GM12878 (cell line): ENCODE measurements at regions of chr12 and their contacts with region 1.

Region 1: DNA sequence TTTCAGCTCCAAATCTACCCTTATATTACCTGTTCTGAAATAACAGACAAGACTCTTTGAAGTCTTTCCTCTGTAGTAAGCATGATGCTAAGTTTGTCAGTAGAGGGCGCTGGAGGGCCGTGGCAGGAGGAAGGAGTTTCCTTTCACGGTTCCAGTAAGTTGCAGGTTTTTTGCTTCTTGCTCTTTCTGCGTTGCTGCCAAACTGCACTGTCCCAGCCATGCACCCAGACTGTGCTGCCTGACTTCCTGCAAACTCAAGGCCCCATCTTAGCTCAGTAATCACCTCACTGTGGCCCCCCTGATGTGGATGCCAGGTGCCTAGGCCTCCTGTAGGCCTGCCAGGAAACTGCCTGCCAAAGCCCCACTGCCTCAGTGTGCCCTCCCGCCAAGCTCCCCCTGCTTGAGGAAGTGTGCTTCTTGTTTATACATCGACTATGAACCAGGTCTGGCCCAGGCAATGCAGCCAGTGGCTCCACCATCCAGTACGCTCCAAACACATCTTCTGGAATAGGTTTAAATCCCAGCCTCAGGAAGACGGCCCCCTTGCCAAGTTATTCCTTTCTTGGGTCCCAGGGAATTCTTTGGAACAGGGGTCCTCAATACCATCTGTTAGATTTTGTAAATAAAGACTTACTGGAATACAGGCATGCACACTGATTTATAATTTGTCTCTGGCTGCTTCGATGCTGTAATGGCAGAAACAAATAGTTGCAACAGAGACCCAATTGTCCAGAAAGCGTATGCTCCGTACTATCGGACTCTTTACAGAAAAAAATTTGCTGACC is 193.7 kb upstream of the LRIG3 start:
- DNase-seq: peak; percentile 9
- ATAC-seq: peak; percentile 92
- H3K4me3 ChIP-seq: no peak overlapping the region
- H3K27ac ChIP-seq: no peak overlapping the region
- H3K4me1 ChIP-seq: no peaks in the 10 kb centered on the region
- H3K27me3 ChIP-seq: no peaks in the 10 kb centered on the region
- CTCF ChIP-seq: peak; percentile 87 to 91 (median 88); a peak in 5 of 6 replicates
- EP300 ChIP-seq: no peak
- POLR2A ChIP-seq: no peak
- RAD21 ChIP-seq: peak; percentile 91

Region 2: DNA sequence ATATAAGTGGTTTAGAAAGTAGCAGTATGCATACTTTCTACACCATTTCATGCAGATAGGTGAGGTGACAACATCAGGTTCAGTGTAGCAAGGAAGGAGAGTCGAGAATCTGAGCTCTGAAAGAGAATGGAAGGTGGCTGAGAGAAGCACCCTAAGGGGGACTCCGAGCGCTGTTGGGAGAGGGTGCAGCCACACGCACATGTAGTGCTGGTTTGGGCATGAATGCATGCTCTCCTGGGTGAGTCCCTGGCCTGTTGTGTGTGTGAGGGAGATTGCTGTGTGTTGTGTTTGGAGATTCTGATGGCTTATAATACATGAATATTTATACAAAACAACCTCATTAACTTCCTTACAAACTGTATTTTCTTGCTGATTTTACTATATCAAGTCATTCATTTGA is 13.4 kb before region 1 on chr12:
- CTCF ChIA-PET with region 1: interaction called, 10 read pairs
- POLR2A ChIA-PET with region 1: no interaction called
- RAD21 ChIA-PET with region 1: no interaction called
- SMC1A ChIA-PET with region 1: no interaction called
- in situ Hi-C with region 1: no loop called
- intact Hi-C with region 1: no loop called
- DNase-seq: no peak
- ATAC-seq: no peak
- H3K4me3 ChIP-seq: no peak overlapping the region
- H3K27ac ChIP-seq: no peak overlapping the region
- H3K4me1 ChIP-seq: no peaks in the 10 kb centered on the region
- H3K27me3 ChIP-seq: no peaks in the 10 kb centered on the region
- CTCF ChIP-seq: no peak
- EP300 ChIP-seq: no peak
- POLR2A ChIP-seq: no peak
- RAD21 ChIP-seq: no peak

Region 3: DNA sequence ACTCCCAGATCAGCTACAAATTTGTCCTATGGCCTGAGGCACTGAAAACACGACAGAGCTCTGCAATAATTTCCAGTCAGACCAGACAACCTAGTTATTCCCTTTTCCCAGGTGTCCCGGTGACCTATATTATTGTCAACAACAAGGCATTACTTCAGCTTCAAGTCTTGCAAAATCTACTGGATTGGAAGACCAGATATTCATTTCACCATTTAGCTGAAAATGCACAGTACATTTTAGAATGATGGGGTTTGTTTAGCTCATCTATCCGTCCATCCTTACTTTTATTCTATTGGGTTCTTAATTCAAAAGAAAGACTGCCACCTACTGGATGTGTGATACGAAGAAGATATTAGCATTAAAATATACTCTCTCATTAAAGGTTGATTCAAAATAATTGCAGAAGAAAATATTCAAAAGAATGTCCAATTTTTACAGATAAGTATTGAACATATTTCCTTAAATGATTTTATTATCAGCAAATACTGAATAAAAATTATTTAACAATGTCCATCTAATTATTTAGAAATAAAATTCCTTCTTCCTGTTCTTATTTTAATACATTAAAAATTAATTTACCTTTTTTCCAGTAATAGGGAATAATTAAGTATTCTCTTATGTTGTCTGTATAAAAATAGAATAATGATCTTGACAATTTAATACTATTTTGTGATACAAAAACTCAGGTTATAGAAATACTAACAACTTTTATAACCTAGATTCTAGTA is 51.1 kb after region 1 on chr12:
- CTCF ChIA-PET with region 1: interaction called, 11 read pairs
- POLR2A ChIA-PET with region 1: no interaction called
- RAD21 ChIA-PET with region 1: no interaction called
- SMC1A ChIA-PET with region 1: interaction called, 4 read pairs
- in situ Hi-C with region 1: no loop called
- intact Hi-C with region 1: no loop called
- DNase-seq: no peak
- ATAC-seq: no peak; the same call in 2 of the 3 replicates
- H3K4me3 ChIP-seq: no peak overlapping the region
- H3K27ac ChIP-seq: no peak overlapping the region
- H3K4me1 ChIP-seq: no peaks in the 10 kb centered on the region
- H3K27me3 ChIP-seq: no peaks in the 10 kb centered on the region
- CTCF ChIP-seq: peak in 1 of 3 experiments; percentile 32; a peak in 2 of 6 replicates
- EP300 ChIP-seq: no peak
- POLR2A ChIP-seq: no peak
- RAD21 ChIP-seq: no peak

Region 4: GRCh38 chr12:59240048-59240447 is 126.0 kb after region 1 on chr12:
- CTCF ChIA-PET with region 1: no interaction called
- POLR2A ChIA-PET with region 1: no interaction called
- RAD21 ChIA-PET with region 1: no interaction called
- SMC1A ChIA-PET with region 1: no interaction called
- in situ Hi-C with region 1: no loop called
- intact Hi-C with region 1: no loop called
- DNase-seq: no peak
- ATAC-seq: no peak
- H3K4me3 ChIP-seq: no peak overlapping the region
- H3K27ac ChIP-seq: no peak overlapping the region
- H3K4me1 ChIP-seq: no peaks in the 10 kb centered on the region
- H3K27me3 ChIP-seq: no peaks in the 10 kb centered on the region
- CTCF ChIP-seq: no peak
- EP300 ChIP-seq: no peak
- POLR2A ChIP-seq: no peak
- RAD21 ChIP-seq: no peak